GM18951 (cell line): ENCODE measurements at regions of chr21 and their contacts with region 1.

Region 1: DNA sequence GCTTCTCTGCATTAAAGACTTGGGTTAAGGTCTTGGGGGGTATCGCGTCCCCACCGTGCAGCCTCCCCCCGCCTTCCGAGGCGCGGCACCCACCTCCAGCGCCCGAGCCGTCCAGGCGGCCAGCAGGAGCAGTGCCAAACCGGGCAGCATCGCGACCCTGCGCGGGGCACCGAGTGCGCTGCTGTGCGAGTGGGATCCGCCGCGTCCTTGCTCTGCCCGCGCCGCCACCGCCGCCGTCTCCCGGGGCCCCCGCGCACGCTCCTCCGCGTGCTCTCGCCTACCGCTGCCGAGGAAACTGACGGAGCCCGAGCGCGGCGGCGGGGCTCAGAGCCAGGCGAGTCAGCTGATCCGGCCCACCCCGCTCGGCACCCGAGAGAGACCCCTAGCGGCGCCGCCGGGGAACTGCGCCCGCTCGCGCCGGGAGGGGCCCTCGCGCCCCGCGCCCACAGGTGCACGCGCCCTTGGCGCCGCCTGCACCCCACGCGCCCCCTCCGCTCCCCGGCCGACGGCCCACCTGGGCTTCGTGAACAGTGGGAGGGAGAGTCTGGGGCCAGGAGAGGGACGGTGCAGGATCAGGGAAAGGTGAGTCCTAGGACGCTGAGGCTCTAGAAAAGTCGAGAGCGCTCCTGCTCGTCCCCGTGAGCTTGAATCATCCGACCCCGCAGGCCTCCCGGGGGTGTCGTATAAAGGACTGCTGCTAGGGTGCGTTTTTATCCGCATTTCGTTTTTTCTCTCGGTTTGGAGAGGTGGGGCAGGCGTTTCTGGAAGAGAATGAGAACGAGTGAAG is at the start of gene APP:
- POLR2A ChIP-seq: peak; percentile 70

Region 2: DNA sequence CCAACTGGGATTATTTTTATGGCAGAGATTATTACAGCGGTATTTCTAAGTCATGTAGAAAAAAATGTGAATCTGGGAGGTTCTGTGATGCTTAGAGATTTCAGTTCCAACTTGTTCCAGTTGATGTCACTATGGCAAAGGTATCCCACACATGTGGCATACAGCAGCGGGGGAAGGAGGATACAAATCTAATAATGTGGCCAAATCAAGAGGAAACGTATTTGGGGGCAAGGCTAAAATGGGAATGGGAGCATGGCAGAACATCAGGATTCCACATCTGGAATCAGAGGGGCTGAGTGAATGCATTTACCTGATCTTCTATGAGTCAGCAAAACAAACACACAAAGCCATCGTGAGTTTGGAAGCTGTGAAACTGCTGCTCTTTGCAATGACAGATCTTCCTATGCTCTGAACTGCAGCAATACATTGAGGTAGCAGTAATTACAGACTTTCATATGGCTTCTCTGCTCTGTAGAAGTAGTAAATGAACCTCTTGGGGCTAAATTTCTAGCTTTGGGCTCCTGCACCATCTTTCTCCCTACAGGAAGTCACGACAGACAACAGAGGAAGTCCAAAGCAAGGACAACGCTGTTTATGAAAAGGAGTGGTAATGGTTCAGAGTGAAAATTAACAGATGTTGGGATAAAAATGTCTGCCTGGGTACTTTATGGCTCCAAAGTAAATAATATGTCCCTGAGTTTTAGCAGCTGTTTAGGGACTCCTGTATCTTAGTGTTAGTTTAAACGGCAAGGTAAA is 380.4 kb before region 1 on chr21:
- in situ Hi-C with region 1: no loop called
- POLR2A ChIP-seq: no peak

Region 3: DNA sequence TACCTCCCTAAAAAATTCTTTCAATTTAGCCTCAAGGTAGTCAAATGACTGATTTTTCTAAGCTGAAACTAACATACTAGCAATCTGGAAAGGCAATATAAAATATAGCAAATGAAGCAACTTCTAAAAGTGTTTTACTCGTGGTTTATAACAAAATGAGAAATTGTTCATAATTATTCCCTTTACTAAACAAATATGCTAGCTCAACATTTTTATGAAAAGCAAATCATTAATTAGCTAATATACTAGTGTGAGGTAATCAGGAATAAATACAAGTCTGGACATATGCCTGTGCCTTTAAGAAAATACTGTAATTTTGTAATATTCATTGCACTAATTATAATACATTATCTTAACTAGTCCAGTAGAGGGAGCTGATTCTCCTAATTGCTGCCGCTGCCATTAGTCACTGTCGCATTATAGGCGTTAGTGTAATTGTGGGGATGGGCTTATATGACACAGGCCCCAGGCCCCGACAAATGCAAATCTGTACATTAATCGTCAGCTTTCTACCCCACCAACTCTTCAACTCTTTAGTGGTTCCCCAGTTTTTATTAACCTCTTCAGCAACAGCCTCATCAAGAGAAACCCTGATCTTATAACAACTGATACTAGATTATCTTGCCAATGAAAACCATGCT is 275.0 kb before region 1 on chr21:
- in situ Hi-C with region 1: loop called (anchors 10 kb)
- POLR2A ChIP-seq: no peak

Region 4: GRCh38 chr21:25938658-25939395 is 231.8 kb before region 1 on chr21:
- in situ Hi-C with region 1: no loop called
- POLR2A ChIP-seq: no peak

Region 5: GRCh38 chr21:26565111-26565510 is 394.4 kb after region 1 on chr21:
- in situ Hi-C with region 1: no loop called
- POLR2A ChIP-seq: no peak